ENCODE measurements at regions of chr2 and their contacts with region 1.

Region 1: GRCh38 chr2:219530048-219530963 is 13.3 kb downstream of the CHPF start:
- DNase-seq: peak; percentile 75 to 91 (median 83)
- ATAC-seq: peak; percentile 99
- H3K4me3 ChIP-seq: no peak overlapping the region
- H3K4me3 Mint-ChIP-seq: no peak overlapping the region
- H3K27ac ChIP-seq: no peak overlapping the region
- H3K27ac Mint-ChIP-seq: no peak overlapping the region
- H3K4me1 ChIP-seq: peaks cover 4% of the 10 kb centered on the region
- H3K4me1 Mint-ChIP-seq: no peaks in the 10 kb centered on the region
- H3K27me3 ChIP-seq: peaks cover 36 to 49% of the 10 kb centered on the region in 2 experiments
- H3K27me3 Mint-ChIP-seq: peaks cover 75% of the 10 kb centered on the region
- CTCF ChIP-seq: peak; percentile 98

Region 2: GRCh38 chr2:219430633-219431615 is 99.4 kb before region 1 on chr2:
- CTCF ChIA-PET with region 1: interaction called, 5 read pairs
- POLR2A ChIA-PET with region 1: no interaction called
- intact Hi-C with region 1: loop called in 1 of 2 experiments (anchors 1 kb)
- DNase-seq: peak in 2 of 14 experiments; percentile 14 to 27
- ATAC-seq: no peak
- H3K4me3 ChIP-seq: no peak overlapping the region
- H3K4me3 Mint-ChIP-seq: no peak overlapping the region
- H3K27ac ChIP-seq: no peak overlapping the region
- H3K27ac Mint-ChIP-seq: no peak overlapping the region
- H3K4me1 ChIP-seq: peaks cover 10% of the 10 kb centered on the region
- H3K4me1 Mint-ChIP-seq: no peaks in the 10 kb centered on the region
- H3K27me3 ChIP-seq: peaks cover 15 to 24% of the 10 kb centered on the region in 2 experiments
- H3K27me3 Mint-ChIP-seq: peaks cover 40% of the 10 kb centered on the region
- CTCF ChIP-seq: peak; percentile 10

Region 3: GRCh38 chr2:219475697-219476651 is 54.3 kb before region 1 on chr2:
- CTCF ChIA-PET with region 1: interaction called, 5 read pairs
- POLR2A ChIA-PET with region 1: no interaction called
- intact Hi-C with region 1: loop called (anchors 1 kb)
- DNase-seq: peak; percentile 29 to 70 (median 48)
- ATAC-seq: peak; percentile 77
- H3K4me3 ChIP-seq: no peak overlapping the region
- H3K4me3 Mint-ChIP-seq: no peak overlapping the region
- H3K27ac ChIP-seq: no peak overlapping the region
- H3K27ac Mint-ChIP-seq: no peak overlapping the region
- H3K4me1 ChIP-seq: no peaks in the 10 kb centered on the region
- H3K4me1 Mint-ChIP-seq: peaks cover 5% of the 10 kb centered on the region
- H3K27me3 ChIP-seq: peaks cover 0 to 6% of the 10 kb centered on the region in 2 experiments
- H3K27me3 Mint-ChIP-seq: peaks cover 10% of the 10 kb centered on the region
- CTCF ChIP-seq: peak; percentile 61

Region 4: DNA sequence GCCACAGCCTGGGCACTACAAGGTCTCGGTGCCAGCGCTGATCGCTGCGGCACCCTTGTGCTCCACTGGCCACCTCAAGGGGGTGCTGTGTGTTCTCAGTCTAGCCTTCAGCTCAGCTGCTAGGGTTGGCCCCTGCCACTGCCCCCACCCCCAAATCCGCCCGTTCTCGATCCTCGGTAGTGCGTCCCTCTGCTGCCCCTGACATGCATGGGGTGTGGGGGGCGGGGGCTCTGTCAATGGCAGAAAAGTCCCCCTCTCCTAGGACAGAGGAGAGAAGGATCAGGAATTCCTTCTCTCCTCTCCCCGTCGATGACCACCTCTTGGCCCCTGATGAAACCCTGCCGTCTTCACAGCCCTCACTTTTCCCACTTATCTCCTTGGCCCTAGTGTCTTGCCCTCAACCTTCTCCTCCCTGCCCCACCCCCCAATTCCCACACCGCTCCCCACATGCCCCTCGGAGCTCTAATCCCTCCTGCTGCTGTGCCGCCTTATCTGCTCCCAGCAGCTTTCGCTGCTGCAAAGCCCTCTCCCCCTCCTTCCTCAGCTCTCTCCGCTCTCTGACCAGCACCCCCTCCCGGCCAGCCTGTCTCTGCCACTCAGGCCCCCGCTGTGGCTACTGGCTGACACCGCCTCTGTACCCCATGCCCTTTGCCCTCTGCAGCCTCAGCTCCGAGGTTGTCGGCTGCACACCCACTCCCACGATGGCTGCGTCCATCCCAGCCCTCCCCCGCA is 20.4 kb before region 1 on chr2:
- CTCF ChIA-PET with region 1: interaction called, 31 read pairs
- POLR2A ChIA-PET with region 1: interaction called, 3 read pairs
- intact Hi-C with region 1: loop called in 1 of 2 experiments (anchors 2 kb)
- DNase-seq: peak in 13 of 14 experiments; percentile 26 to 73 (median 43)
- ATAC-seq: peak; percentile 94
- H3K4me3 ChIP-seq: no peak overlapping the region
- H3K4me3 Mint-ChIP-seq: peak overlapping the region; percentile 28
- H3K27ac ChIP-seq: no peak overlapping the region
- H3K27ac Mint-ChIP-seq: no peak overlapping the region
- H3K4me1 ChIP-seq: peaks cover 33% of the 10 kb centered on the region
- H3K4me1 Mint-ChIP-seq: peaks cover 25% of the 10 kb centered on the region
- H3K27me3 ChIP-seq: peaks cover 49 to 59% of the 10 kb centered on the region in 2 experiments
- H3K27me3 Mint-ChIP-seq: peaks cover 61% of the 10 kb centered on the region
- CTCF ChIP-seq: peak; percentile 61

Region 5: GRCh38 chr2:220029013-220029412 is 498.7 kb after region 1 on chr2:
- CTCF ChIA-PET with region 1: no interaction called
- POLR2A ChIA-PET with region 1: no interaction called
- intact Hi-C with region 1: no loop called
- DNase-seq: no peak
- ATAC-seq: no peak
- H3K4me3 ChIP-seq: no peak overlapping the region
- H3K4me3 Mint-ChIP-seq: no peak overlapping the region
- H3K27ac ChIP-seq: no peak overlapping the region
- H3K27ac Mint-ChIP-seq: no peak overlapping the region
- H3K4me1 ChIP-seq: no peaks in the 10 kb centered on the region
- H3K4me1 Mint-ChIP-seq: no peaks in the 10 kb centered on the region
- H3K27me3 ChIP-seq: no peaks in the 10 kb centered on the region
- H3K27me3 Mint-ChIP-seq: no peaks in the 10 kb centered on the region
- CTCF ChIP-seq: no peak